ENCODE measurements at regions of chr2 and their contacts with region 1.

Region 1: DNA sequence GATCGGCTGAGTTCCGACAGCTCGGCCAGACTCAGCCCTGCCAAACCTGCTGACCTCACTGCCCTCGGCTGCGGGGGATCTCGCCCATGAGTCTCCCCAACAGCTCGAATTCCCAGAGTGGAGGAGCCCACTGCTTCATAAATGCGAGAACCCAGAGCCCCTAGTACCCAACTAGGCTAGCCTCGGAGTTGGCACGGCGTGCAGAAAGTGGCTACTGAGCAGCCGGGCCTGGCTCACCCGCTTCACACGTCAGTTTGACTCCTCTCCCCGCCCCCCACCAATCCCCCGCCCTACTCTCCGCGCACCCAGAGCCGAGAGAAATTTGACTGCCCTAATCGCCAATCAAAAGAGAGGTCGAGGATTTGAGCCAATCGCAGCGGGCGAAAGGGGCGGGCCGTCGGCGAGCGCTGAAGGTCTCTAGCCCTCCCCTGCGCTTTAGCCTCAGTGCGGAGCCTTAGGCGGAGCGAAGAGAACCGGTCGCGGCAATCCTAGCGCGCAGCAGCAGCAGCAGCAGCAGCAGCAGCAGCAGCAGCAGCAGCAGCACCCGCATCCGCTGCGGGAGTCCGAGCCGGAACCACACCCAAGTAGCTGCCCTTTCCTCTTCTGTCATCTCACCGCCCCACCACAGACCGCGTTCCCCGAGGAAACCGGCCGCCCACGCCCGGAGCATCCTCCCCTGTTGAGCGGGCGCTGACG is at the start of gene GLS:
- DNase-seq: peak; percentile 98
- H3K4me3 Mint-ChIP-seq: peak within 1 kb of the TSS; percentile 96
- H3K27ac Mint-ChIP-seq: peak within 1 kb of the TSS; percentile 99
- H3K4me1 Mint-ChIP-seq: peaks cover 42% of the 10 kb centered on the region
- H3K27me3 Mint-ChIP-seq: no peaks in the 10 kb centered on the region
- total RNA-seq, gene GLS: 248 to 255 TPM

Region 2: DNA sequence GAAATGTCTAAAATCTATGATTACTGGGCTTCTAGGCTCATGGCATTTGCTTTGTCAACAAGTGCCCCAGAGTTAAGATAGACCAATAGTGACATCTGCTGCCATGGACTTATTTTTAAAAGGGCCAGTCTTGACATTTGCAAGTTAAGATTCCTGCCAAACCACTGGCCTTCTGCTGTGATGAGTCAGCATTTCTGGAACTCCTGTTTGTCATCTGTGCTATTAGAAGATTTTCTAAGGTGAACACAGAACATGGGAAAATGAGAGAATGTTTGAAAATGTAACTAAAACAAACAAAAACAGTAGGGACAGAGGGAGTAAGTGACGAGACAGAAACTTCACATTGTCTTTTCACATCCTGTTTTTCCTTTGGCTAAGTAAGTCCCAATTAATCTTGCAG is 1533.0 kb before region 1 on chr2:
- CTCF ChIA-PET with region 1: no interaction called
- intact Hi-C with region 1: no loop called
- DNase-seq: peak; percentile 28
- H3K4me3 Mint-ChIP-seq: no peak overlapping the region
- H3K27ac Mint-ChIP-seq: no peak overlapping the region
- H3K4me1 Mint-ChIP-seq: peaks cover 17% of the 10 kb centered on the region
- H3K27me3 Mint-ChIP-seq: no peaks in the 10 kb centered on the region

Region 3: DNA sequence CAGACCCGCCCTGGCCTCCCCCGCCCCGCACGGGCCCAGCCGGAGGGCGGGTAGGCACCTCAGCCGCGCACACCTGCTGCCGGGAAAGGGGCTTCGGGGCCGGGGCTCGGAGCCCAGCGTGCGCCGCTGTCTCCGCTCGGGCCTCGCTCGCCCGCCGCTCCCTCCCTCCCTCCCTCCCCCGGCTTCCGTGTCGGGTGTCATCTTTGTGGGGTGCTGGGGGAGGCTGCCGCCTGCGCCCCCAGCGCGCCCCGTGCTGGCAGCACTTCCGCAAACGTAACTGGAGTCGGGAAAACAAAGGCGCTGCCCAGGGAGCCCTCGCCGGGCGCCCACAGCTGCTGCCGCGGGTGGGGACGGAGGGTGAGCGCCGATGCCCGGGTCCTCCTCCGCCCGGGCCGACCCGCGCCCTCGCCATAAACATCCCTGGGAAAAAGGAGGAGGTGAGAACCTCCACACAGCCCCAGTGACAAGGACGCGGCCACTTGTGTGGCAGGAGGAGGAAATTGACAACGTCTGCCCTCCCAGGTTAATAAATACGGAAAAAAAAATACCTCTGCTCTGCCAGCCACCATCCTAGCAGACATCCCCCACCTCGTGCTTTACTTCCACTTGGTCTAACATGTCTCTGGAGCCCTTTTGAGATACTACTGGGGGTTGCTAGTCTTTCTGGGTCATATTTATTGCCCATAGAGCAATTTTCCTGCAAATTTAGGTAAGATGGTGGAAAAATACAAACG is 471.8 kb before region 1 on chr2:
- CTCF ChIA-PET with region 1: no interaction called
- intact Hi-C with region 1: loop called (anchors 5 kb)
- DNase-seq: peak; percentile 71
- H3K4me3 Mint-ChIP-seq: peak overlapping the region; percentile 84
- H3K27ac Mint-ChIP-seq: peak overlapping the region; percentile 90
- H3K4me1 Mint-ChIP-seq: peaks cover 46% of the 10 kb centered on the region
- H3K27me3 Mint-ChIP-seq: no peaks in the 10 kb centered on the region

Region 4: DNA sequence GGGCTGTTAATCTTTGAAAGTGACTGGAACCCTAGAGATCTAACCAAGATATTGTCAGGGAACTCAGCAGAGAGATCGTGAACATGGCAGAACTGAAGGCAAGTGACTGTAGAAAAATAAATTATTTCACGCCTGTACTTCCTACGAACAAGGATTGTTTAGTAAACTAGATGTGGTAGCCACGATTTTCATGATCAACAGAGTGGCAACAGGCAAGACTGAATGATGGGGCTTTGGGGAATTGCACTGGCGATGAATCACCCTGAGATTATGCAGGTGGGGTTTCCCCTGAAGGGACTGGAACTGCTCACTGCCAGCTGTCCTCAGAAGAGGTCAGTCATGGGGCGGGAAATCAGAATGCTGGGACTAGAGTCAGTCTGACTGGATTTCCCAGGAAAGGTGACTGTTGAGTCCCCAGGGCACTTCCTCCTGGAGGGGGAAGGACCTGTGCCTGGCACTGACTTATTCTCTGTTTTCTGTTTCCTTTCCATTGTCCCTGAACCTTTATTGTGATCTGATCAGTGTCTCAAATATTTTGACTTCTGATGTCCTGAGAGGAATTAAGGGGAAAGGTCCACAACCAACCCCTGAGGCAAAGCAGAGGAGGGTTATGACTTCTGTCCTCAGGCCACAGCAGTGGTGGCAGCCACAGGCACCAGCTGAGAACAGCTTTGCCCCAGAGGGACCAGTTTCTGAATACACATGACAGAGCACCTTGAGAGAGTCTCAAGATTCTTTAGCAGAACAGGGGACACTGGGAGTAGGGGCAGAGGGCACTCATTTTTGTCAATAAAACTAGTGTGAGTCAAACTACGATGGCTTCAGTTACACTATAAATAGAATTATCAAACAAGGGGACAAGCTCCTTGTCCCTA is 161.6 kb before region 1 on chr2:
- CTCF ChIA-PET with region 1: no interaction called
- intact Hi-C with region 1: loop called (anchors 1 kb)
- DNase-seq: peak; percentile 93
- H3K4me3 Mint-ChIP-seq: peak overlapping the region; percentile 0
- H3K27ac Mint-ChIP-seq: peak overlapping the region; percentile 60
- H3K4me1 Mint-ChIP-seq: peaks cover 65% of the 10 kb centered on the region
- H3K27me3 Mint-ChIP-seq: no peaks in the 10 kb centered on the region

Region 5: DNA sequence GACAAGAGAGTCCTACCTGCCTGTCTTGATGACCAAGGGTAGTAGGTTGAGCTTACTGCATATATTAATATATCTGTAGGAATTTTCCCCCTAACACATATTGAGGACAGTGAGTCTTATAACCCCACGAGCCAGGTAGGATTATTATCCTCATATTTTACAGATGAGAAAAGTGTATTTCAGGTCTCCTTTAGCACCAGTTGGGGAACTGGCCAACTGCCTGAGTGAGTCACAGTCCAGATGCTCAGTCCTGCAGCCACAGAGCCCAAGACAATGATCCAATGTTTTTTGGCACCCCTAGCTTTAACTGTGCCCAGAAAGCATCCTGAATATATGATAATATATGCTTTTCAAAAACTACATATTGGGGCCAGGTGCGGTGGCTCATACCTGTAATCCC is 30.8 kb before region 1 on chr2:
- CTCF ChIA-PET with region 1: interaction called, 34 read pairs
- intact Hi-C with region 1: loop called (anchors 1 kb)
- DNase-seq: no peak
- H3K4me3 Mint-ChIP-seq: no peak overlapping the region
- H3K27ac Mint-ChIP-seq: no peak overlapping the region
- H3K4me1 Mint-ChIP-seq: peaks cover 19% of the 10 kb centered on the region
- H3K27me3 Mint-ChIP-seq: no peaks in the 10 kb centered on the region

Region 6: GRCh38 chr2:190947711-190948251 is 67.3 kb after region 1 on chr2:
- CTCF ChIA-PET with region 1: interaction called, 3 read pairs
- intact Hi-C with region 1: loop called (anchors 1 kb)
- DNase-seq: peak; percentile 42
- H3K4me3 Mint-ChIP-seq: no peak overlapping the region
- H3K27ac Mint-ChIP-seq: peak overlapping the region; percentile 32
- H3K4me1 Mint-ChIP-seq: peaks cover 7% of the 10 kb centered on the region
- H3K27me3 Mint-ChIP-seq: no peaks in the 10 kb centered on the region

Region 7: GRCh38 chr2:191150600-191151330 is 270.2 kb after region 1 on chr2 and contains the start of gene STAT4:
- CTCF ChIA-PET with region 1: no interaction called
- intact Hi-C with region 1: loop called (anchors 1 kb)
- DNase-seq: peak; percentile 94
- H3K4me3 Mint-ChIP-seq: peak within 1 kb of the TSS; percentile 91
- H3K27ac Mint-ChIP-seq: peak within 1 kb of the TSS; percentile 97
- H3K4me1 Mint-ChIP-seq: peaks cover 57% of the 10 kb centered on the region
- H3K27me3 Mint-ChIP-seq: no peaks in the 10 kb centered on the region
- total RNA-seq, gene STAT4: 53.9 to 54.6 TPM

Region 8: DNA sequence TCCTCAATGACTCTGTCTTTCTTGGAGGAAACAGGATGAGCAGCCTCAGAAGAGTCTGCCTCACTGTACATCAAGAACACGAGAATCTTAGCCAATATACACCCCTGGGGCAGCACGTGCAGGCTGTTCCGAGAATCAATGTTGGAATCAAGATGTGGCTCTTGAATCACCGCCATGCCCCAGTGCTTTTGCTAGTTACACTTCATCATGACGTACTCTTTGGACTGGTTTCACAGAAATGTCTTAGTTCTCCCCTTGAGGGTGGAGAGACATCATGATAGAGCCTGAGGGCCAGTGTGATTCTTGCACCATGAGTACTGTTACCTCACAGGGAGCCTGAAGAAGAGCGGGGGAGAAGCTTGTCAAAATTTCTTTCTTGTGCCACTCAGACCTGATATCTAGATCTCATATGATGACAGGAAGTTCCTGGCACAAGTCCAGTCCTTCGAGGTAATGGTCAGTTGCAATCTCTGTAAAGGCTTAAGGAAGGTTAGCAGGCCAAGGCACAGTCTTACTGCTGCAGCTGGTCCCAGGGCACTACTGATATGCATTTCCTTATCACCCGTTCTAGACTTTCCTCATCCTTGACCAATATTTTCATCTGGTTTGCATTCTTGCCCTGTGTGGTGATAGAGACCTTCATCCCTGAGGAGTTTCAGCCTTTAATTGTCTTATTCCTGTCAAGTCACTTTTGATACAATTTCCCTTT is 298.4 kb after region 1 on chr2:
- CTCF ChIA-PET with region 1: no interaction called
- intact Hi-C with region 1: no loop called
- DNase-seq: no peak
- H3K4me3 Mint-ChIP-seq: no peak overlapping the region
- H3K27ac Mint-ChIP-seq: no peak overlapping the region
- H3K4me1 Mint-ChIP-seq: peaks cover 38% of the 10 kb centered on the region
- H3K27me3 Mint-ChIP-seq: no peaks in the 10 kb centered on the region

Region 9: DNA sequence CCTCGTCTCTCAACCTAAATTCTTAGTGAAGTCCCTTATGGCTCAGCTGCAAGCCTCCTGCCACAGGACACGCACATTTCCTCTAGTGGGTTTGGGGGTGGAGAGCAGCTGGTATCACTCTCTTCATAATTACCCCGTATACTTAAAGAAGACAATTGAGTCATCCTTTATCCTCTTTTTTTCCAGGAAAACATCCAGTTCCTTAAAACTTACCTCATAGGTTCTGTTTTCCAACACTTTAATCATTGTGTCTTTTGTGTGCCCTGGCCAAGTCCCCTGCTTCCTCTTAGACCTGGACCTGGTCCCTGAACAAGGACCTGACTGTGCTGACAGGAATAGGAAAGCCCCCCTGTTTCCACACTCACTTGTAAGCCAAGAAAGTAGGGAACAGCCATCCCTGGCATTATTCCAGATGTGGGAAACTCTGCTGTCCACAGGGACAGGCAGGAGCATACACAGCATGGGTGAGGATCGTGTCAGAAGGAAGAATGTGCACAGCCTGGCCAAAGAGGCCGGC is 322.4 kb after region 1 on chr2:
- CTCF ChIA-PET with region 1: no interaction called
- intact Hi-C with region 1: no loop called
- DNase-seq: peak; percentile 39
- H3K4me3 Mint-ChIP-seq: no peak overlapping the region
- H3K27ac Mint-ChIP-seq: peak overlapping the region; percentile 43
- H3K4me1 Mint-ChIP-seq: peaks cover 51% of the 10 kb centered on the region
- H3K27me3 Mint-ChIP-seq: no peaks in the 10 kb centered on the region